Aorta (tissue), 5 donors: ENCODE measurements at regions of chr18 and their contacts with region 1.

Region 1: GRCh38 chr18:61738488-61738887 is 154.3 kb downstream of the RNF152 start:
- DNase-seq: no peak
- ATAC-seq: peak; percentile 60
- H3K4me3 ChIP-seq: no peak overlapping the region
- H3K27ac ChIP-seq: peak overlapping the region; percentile 59 to 88
- H3K4me1 ChIP-seq: peaks cover 11 to 13% of the 10 kb centered on the region in 2 donors
- H3K27me3 ChIP-seq: no peaks in the 10 kb centered on the region

Region 2: GRCh38 chr18:61702007-61702406 is 36.5 kb before region 1 on chr18:
- intact Hi-C with region 1: loop called (anchors 5 kb)
- DNase-seq: no peak
- ATAC-seq: peak; percentile 76
- H3K4me3 ChIP-seq: no peak overlapping the region
- H3K27ac ChIP-seq: peak overlapping the region; percentile 64 to 84
- H3K4me1 ChIP-seq: peaks cover 0 to 4% of the 10 kb centered on the region in 2 donors
- H3K27me3 ChIP-seq: no peaks in the 10 kb centered on the region

Region 3: GRCh38 chr18:61833387-61833786 is 94.9 kb after region 1 on chr18:
- intact Hi-C with region 1: loop called (anchors 10 kb)
- DNase-seq: no peak
- ATAC-seq: no peak
- H3K4me3 ChIP-seq: no peak overlapping the region
- H3K27ac ChIP-seq: no peak overlapping the region
- H3K4me1 ChIP-seq: peaks cover 0 to 8% of the 10 kb centered on the region in 2 donors
- H3K27me3 ChIP-seq: no peaks in the 10 kb centered on the region

Region 4: DNA sequence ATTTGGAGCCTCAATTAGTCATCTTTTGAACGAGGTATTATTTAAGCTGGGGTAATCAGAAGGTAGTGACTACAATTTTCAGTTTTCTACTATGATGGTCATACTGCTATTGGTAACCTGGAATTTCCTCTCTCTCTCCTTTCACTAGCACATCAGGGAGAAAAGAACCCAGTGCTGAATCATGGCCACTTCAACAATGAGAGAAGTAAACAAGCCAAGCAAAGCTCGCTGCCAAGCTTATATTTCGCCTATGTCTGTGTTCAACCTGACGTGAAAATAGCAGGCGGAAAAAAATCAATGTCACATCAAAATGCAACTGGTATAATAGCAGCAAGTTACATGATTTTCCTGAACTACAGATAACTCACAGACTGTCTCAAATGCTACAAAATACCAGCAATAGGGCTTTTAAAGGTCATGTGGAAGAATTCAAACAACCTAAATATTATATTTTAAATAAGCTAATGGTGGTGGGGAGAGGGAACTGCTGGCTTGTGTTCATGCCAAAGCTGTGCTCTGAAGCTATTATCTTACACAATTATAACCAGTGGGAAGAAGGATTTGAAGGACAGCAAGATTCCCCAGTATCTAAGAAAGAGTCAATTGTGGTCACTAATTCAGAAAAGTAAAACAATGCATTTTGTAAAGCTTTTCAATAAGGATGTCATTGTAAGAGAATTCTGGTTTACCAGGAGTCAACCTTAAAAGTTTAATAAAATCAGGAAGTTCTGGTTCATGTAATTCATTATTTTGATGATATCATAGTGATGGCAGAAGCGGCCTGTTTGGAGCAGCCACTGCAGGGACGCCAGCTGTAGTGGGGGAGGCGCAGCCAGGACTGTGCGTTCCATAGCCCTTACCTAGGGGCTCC is 116.3 kb after region 1 on chr18:
- intact Hi-C with region 1: loop called in 1 of 2 experiments (anchors 5 kb)
- DNase-seq: no peak
- ATAC-seq: no peak
- H3K4me3 ChIP-seq: no peak overlapping the region
- H3K27ac ChIP-seq: no peak overlapping the region
- H3K4me1 ChIP-seq: peaks cover 2 to 3% of the 10 kb centered on the region in 2 donors
- H3K27me3 ChIP-seq: no peaks in the 10 kb centered on the region